ENCODE measurements at regions of chr18 and their contacts with region 1.

Region 1: GRCh38 chr18:35343936-35344735 is at the start of gene ZNF24:
- DNase-seq: peak; percentile 95 to 98 (median 97)
- H3K4me3 ChIP-seq: peak within 1 kb of the TSS; percentile 70 to 100 (median 94)
- H3K27ac ChIP-seq: peak within 1 kb of the TSS; percentile 93 to 100 (median 100)
- H3K27me3 ChIP-seq: no peaks in the 10 kb centered on the region
- CTCF ChIP-seq: peak in 5 of 56 donors; percentile 7 to 25 (median 15)
- total RNA-seq, gene ZNF24: 49.1 to 124 (median 68.9) TPM

Region 2: GRCh38 chr18:35040988-35041814 is 302.9 kb before region 1 on chr18 and contains the start of gene MAPRE2:
- intact Hi-C with region 1: loop called in 1 of 2 experiments (anchors 10 kb)
- DNase-seq: peak; percentile 99 to 100 (median 99)
- H3K4me3 ChIP-seq: peak within 1 kb of the TSS; percentile 57 to 99 (median 88)
- H3K27ac ChIP-seq: peak within 1 kb of the TSS; percentile 69 to 98 (median 94)
- H3K27me3 ChIP-seq: no peaks in the 10 kb centered on the region
- CTCF ChIP-seq: peak in 9 of 56 donors; percentile 8 to 36 (median 14)
- total RNA-seq, gene MAPRE2: 105 to 278 (median 202) TPM

Region 3: GRCh38 chr18:35231052-35231451 is 113.1 kb before region 1 on chr18:
- intact Hi-C with region 1: loop called in 1 of 2 experiments (anchors 5 kb)
- DNase-seq: peak; percentile 75 to 90 (median 81)
- H3K4me3 ChIP-seq: peak overlapping the region in 47 of 59 donors; percentile 0 to 61 (median 34)
- H3K27ac ChIP-seq: peak overlapping the region in 53 of 59 donors; percentile 1 to 98 (median 76)
- H3K27me3 ChIP-seq: no peaks in the 10 kb centered on the region
- CTCF ChIP-seq: peak; percentile 73 to 98 (median 94)

Region 4: GRCh38 chr18:35240664-35241447 is 103.3 kb before region 1 on chr18 and contains the start of gene ZNF397:
- intact Hi-C with region 1: loop called (anchors 1 to 5 kb)
- DNase-seq: peak; percentile 94 to 99 (median 97)
- H3K4me3 ChIP-seq: peak within 1 kb of the TSS; percentile 64 to 92 (median 83)
- H3K27ac ChIP-seq: peak within 1 kb of the TSS; percentile 87 to 100 (median 99)
- H3K27me3 ChIP-seq: no peaks in the 10 kb centered on the region
- CTCF ChIP-seq: peak in 20 of 56 donors; percentile 1 to 41 (median 21)
- total RNA-seq, gene ZNF397: 32.9 to 72.7 (median 48.5) TPM

Region 5: GRCh38 chr18:35290073-35290735 is 53.9 kb before region 1 on chr18 and contains the start of gene ZSCAN30:
- intact Hi-C with region 1: loop called (anchors 2 to 5 kb)
- DNase-seq: peak; percentile 88 to 95 (median 94)
- H3K4me3 ChIP-seq: peak within 1 kb of the TSS; percentile 63 to 99 (median 86)
- H3K27ac ChIP-seq: peak within 1 kb of the TSS; percentile 26 to 96 (median 85)
- H3K27me3 ChIP-seq: no peaks in the 10 kb centered on the region
- CTCF ChIP-seq: peak in 23 of 56 donors; percentile 8 to 47 (median 21)
- total RNA-seq, gene ZSCAN30: 17.0 to 49.2 (median 28.7) TPM

Region 6: DNA sequence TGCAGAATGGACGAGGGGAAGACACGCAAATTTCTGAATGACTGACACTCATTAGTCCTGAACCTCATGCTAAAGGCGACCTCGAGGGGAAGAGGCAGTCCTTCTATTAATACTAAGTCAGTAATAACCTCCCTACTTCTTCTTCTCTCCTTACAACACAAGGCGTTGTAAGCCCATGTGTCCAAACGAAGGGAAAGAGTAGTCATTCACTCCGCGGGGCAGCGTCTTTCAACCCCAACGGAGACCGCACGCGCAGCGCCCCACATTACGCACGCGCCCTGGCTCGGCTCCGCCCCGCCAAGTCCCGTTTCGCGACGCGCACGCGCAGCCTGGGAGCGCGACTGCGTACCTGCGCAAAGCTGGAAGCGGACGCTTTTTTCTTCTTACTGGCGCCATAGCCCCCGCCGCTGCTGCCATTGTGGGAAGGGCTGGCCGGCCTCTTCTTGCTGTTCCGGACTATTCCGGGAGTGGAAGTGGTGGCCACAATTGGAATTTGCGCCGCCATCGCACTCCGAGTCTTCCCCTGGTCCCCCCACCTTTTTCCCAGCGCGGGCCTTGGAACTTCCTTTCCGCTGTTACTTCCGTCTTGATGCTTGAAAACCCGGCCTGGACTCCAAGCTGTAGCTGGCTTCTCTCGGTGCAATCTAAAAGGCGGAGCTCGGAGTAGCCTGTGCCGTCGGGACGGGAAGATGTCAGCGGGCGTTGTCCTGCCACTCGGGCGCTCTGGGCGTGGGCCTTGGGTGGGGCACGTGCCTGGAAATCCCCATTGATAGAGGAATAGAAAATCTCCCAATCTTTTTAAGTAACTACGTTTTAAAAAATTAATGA is 153.4 kb after region 1 on chr18 and contains the start of gene INO80C:
- intact Hi-C with region 1: loop called in 1 of 2 experiments (anchors 5 kb)
- DNase-seq: peak; percentile 73 to 91 (median 88)
- H3K4me3 ChIP-seq: peak within 1 kb of the TSS; percentile 52 to 92 (median 76)
- H3K27ac ChIP-seq: peak within 1 kb of the TSS; percentile 75 to 99 (median 94)
- H3K27me3 ChIP-seq: no peaks in the 10 kb centered on the region
- CTCF ChIP-seq: peak in 34 of 56 donors; percentile 5 to 51 (median 20)
- total RNA-seq, gene INO80C: 13.8 to 40.5 (median 27.1) TPM